ENCODE measurements at regions of chrX and their contacts with region 1.

Region 1: GRCh38 chrX:107894038-107894437 is 68.4 kb downstream of the MID2 start:
- DNase-seq: no peak
- H3K4me3 ChIP-seq: no peak overlapping the region
- H3K27ac ChIP-seq: no peak overlapping the region
- H3K27me3 ChIP-seq: peaks cover 0 to 62% (median 15%) of the 10 kb centered on the region in 45 donors
- CTCF ChIP-seq: peak in 54 of 56 donors; percentile 20 to 75 (median 58)

Region 2: DNA sequence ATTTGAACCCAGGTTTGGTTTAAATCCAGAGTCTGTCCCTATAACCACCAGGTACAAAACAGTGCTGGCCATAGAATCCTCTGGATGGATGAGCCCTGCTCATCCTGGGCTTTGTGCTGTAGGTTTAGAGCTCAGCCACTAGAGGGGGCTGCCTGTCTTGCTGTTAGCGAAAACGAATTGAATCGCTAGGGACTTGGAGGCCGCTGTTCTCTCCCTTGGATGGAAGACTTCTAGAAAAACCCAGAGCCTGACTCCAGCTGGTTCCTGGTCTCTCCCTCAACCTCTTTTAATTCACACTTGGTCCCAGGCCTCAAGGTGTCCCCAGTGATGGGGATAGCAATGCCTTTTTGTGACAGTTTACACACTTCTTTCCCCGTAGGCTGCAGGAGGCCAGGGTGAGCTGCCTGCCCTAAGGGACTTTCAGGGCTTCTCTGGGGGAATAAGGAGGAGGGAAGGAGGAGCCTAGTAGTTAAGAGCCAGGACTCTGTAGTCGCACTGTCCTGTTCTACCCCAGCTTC is 999.6 kb before region 1 on chrX:
- intact Hi-C with region 1: loop called in 1 of 2 experiments (anchors 5 kb)
- DNase-seq: peak in 9 of 10 donors; percentile 23 to 64 (median 53)
- H3K4me3 ChIP-seq: no peak overlapping the region
- H3K27ac ChIP-seq: no peak overlapping the region
- H3K27me3 ChIP-seq: peaks cover 0 to 94% (median 36%) of the 10 kb centered on the region in 45 donors
- CTCF ChIP-seq: peak in 55 of 56 donors; percentile 51 to 90 (median 79)

Region 3: DNA sequence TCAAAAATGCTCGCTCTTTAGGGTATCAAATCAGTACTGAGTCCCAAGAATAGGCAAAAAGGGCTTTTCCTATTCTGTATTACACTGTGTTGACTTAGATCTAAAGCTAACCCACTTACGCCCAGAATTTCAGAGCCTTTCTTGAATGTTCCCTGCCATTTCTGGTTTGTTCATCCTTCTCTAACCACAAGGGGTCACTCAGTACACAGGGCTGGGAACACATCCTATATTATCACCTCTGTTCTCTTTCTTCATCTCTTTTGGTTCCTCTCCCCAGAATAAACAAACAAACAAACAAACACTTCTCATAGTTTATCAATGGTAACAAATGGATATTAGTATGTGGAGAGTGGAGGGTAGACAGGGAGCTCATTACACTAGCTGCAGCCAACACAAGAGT is 868.5 kb before region 1 on chrX:
- intact Hi-C with region 1: loop called in 1 of 2 experiments (anchors 10 kb)
- DNase-seq: no peak
- H3K4me3 ChIP-seq: no peak overlapping the region
- H3K27ac ChIP-seq: no peak overlapping the region
- H3K27me3 ChIP-seq: peaks cover 0 to 94% (median 22%) of the 10 kb centered on the region in 45 donors
- CTCF ChIP-seq: peak in 51 of 56 donors; percentile 15 to 64 (median 44)

Region 4: GRCh38 chrX:107654872-107655761 is 238.9 kb before region 1 on chrX:
- intact Hi-C with region 1: loop called in 1 of 2 experiments (anchors 10 kb)
- DNase-seq: peak in 1 of 10 donors; percentile 32
- H3K4me3 ChIP-seq: no peak overlapping the region
- H3K27ac ChIP-seq: no peak overlapping the region
- H3K27me3 ChIP-seq: peaks cover 0 to 83% (median 29%) of the 10 kb centered on the region in 45 donors
- CTCF ChIP-seq: peak in 54 of 56 donors; percentile 14 to 67 (median 57)

Region 5: DNA sequence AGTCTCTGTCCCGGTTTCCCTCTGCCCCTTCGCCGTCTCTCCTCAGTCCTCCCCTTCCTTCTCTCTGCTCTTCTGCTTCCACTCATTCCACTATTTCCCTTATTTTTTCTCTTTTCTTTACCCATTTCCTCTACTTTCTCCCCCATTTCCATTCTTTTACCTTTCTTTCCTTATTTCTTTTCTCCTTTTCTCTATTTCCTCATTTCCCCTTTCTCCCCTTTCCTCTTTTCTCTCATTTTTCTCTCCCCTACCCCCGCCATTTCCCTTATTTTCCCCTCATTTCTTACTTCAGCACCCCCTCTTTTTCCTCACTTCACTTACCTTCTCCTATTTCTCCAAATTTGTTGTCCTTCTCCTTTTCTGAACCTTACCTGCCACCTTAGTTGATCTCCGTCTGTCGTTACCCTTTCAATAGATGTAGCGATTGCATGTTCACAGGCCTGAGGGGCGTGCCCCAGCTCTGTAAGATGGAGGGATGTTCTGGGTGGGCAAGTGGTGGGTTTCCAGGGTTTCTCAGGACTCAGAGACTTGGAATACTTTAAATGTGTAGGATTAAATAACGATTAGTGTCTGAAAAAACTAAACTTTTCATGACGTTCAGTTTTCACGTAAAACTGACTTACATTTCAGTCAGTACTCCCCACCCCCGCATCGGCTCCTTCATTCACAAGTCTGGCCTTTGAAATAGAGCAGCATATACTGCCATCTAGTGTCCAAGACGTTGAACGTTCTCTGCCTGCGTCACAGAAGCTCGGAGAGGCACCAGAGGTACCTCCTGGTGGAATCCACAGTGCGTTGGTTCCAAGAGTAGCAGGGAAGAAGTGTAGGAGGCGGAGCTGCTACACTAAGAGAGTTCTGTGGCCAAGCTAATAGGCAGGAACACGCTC is 117.1 kb before region 1 on chrX:
- intact Hi-C with region 1: no loop called
- DNase-seq: peak; percentile 47 to 91 (median 80)
- H3K4me3 ChIP-seq: peak overlapping the region in 58 of 59 donors; percentile 35 to 76 (median 62)
- H3K27ac ChIP-seq: peak overlapping the region in 49 of 59 donors; percentile 32 to 87 (median 79)
- H3K27me3 ChIP-seq: peaks cover 0 to 76% (median 19%) of the 10 kb centered on the region in 45 donors
- CTCF ChIP-seq: peak; percentile 37 to 89 (median 82)